Activated naive CD4-positive, alpha-beta T cell treated with anti-CD3 and anti-CD28 coated beads for 36 hours (primary cell): ENCODE measurements at regions of chr3 and their contacts with region 1.

Region 1: DNA sequence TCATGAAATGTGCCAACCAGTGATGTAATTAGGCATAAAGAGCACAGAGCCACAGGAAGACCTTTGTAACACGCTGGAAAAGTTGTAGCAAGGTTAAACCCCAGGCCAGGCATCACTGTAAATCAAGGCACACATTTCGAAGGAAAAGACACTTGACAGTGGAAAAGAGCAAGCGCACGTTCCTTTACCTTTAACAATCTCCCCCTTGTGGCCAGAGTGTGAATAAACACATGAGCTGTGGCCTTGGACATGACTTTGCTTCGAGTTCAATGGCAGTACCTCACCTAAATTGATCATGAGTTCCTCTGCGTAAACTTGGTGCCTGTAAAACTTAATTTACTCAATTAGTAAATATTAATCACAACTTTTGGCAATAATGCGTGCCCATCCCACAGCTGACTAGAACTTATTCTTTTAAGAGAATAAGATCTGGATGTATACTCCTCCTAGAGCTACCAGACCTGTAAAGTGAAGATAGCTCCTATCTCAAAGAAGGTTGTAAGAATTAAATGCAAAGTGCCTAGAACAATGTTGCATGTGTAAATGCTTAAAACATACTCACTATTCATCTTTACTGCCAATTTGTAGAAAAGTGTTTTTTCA is 757.0 kb upstream of the NECTIN3 start:
- DNase-seq: peak; percentile 66
- H3K4me3 Mint-ChIP-seq: no peak overlapping the region
- H3K27ac Mint-ChIP-seq: no peak overlapping the region
- H3K4me1 Mint-ChIP-seq: peaks cover 2% of the 10 kb centered on the region
- H3K27me3 Mint-ChIP-seq: no peaks in the 10 kb centered on the region

Region 2: GRCh38 chr3:109275702-109276293 is 1038.8 kb before region 1 on chr3:
- CTCF ChIA-PET with region 1: no interaction called
- intact Hi-C with region 1: loop called (anchors 10 kb)
- DNase-seq: peak; percentile 34
- H3K4me3 Mint-ChIP-seq: no peak overlapping the region
- H3K27ac Mint-ChIP-seq: no peak overlapping the region
- H3K4me1 Mint-ChIP-seq: no peaks in the 10 kb centered on the region
- H3K27me3 Mint-ChIP-seq: peaks cover 4% of the 10 kb centered on the region

Region 3: DNA sequence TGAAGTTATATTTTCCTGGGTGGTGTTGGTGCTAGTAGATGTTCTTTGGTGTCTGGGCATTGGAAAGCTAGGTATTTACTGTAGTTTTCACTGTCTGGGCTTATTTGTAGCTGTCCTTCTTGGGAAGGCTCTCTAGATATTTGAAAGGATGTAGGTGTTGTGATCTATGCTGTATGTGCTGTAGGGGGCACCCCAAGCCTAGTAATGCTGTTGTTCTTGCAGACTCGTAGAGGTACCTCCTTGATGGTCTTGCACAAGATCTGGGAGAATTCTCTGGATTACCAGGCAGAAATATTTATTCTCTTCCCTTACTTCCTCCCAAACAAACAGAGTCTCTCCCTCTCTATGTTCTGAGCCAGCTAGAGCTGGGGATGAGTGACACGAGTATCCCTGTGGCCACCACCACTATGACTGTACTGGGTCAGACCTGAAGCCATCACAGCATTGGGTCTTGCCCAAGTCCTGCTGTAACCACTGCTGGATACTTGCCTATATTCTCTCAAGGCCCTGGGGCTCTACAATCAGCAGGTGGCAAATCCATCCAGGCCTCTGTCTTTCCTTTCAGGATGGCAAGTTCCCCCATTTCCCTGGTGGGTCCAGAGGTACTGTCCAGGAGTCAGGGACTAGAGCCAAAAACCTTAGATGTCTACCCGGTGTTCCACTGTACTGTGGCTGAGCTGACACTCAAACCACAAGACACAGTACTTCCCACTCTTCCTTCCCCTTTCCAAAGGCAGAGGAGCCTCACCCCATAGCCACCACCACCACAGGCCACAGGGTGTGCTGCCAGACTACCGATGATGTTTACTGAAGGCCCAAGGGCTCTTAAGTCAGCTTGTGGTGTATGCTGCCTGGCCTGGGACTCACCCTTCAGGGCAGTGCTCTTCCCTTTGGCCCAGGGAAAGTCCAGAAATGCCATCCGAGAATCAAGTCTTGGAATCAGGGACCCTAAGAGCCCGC is 782.1 kb before region 1 on chr3:
- CTCF ChIA-PET with region 1: interaction called, 14 read pairs
- intact Hi-C with region 1: loop called (anchors 1 kb)
- DNase-seq: peak; percentile 67
- H3K4me3 Mint-ChIP-seq: no peak overlapping the region
- H3K27ac Mint-ChIP-seq: no peak overlapping the region
- H3K4me1 Mint-ChIP-seq: no peaks in the 10 kb centered on the region
- H3K27me3 Mint-ChIP-seq: peaks cover 5% of the 10 kb centered on the region

Region 4: DNA sequence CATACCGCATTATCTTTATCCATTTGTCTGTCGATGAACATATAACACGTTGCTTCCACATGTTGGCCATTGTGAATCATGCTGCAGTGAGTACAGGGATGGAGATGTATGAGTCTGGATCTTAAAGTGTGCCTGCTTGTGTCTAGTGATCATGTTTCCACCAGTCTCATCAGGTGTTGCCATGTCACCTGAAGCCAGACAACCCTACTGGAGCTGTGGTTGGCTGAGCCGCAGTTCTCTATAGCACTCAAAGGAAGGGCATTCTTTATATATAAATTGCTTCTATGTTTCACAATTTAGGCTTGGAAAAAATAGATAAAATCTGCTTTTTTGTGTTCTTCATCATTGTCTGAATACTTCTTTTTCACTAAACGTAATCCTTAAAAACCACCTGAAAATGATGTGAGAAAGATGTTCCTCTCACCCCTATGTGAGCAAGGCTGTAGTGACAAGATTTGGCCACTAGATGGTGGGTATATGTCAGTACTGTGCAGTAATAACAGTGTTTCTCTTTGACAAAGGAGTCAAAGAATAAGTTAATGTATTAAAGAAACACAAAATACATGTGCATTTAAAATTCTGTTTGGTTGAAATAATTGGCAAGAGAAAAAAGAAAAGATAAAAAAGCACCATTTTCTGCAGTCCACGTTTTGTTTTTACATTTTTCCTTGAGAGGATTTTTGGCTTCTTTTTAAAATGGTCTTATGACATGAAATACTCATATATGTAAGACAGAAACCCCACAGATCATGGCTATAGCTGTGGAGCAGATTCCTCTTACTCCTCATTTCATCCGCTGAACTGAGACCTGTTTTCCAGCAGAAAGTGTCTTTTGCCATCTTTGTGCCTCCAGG is 582.8 kb before region 1 on chr3:
- CTCF ChIA-PET with region 1: no interaction called
- intact Hi-C with region 1: loop called (anchors 1 kb)
- DNase-seq: peak; percentile 77
- H3K4me3 Mint-ChIP-seq: no peak overlapping the region
- H3K27ac Mint-ChIP-seq: no peak overlapping the region
- H3K4me1 Mint-ChIP-seq: peaks cover 3% of the 10 kb centered on the region
- H3K27me3 Mint-ChIP-seq: no peaks in the 10 kb centered on the region

Region 5: DNA sequence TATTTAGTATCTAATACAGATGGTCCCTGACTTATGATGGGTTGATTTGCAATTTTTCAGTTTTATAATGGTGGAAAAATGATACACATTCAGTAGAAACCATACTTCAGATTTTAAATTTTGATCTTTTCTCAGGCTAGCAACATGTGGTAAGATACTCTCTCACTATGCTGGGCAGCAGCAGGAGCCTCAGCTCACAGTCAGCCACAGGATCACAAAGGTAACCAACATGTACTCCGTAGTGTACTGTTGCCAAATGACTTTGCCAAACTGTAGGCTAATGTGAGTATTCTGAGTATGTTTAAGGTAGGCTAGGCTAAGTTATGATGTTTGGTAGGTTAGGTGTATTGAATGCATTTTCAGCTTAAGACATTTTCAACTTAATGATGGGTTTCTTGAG is 478.7 kb before region 1 on chr3:
- CTCF ChIA-PET with region 1: no interaction called
- intact Hi-C with region 1: no loop called
- DNase-seq: no peak
- H3K4me3 Mint-ChIP-seq: no peak overlapping the region
- H3K27ac Mint-ChIP-seq: no peak overlapping the region
- H3K4me1 Mint-ChIP-seq: peaks cover 1% of the 10 kb centered on the region
- H3K27me3 Mint-ChIP-seq: no peaks in the 10 kb centered on the region

Region 6: DNA sequence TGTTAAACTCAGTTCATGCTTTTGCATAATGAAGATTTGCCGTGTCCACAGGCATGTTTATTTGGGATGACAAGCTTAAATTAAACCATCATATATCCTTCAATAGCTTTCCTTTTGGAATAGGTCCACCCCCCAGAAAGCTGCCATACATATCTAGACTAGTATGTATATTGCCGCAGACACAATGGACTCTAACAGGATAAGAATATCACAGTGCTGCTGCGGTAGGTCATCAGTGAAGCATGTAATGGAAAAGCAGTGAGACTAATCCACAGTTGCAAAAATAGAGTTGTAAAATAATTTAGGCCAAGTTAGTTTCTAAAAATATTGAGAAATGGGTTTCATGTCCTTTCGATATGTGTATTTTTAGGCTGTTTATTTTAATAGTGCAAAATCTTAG is 157.4 kb before region 1 on chr3:
- CTCF ChIA-PET with region 1: no interaction called
- intact Hi-C with region 1: no loop called
- DNase-seq: no peak
- H3K4me3 Mint-ChIP-seq: no peak overlapping the region
- H3K27ac Mint-ChIP-seq: no peak overlapping the region
- H3K4me1 Mint-ChIP-seq: no peaks in the 10 kb centered on the region
- H3K27me3 Mint-ChIP-seq: no peaks in the 10 kb centered on the region

Region 7: DNA sequence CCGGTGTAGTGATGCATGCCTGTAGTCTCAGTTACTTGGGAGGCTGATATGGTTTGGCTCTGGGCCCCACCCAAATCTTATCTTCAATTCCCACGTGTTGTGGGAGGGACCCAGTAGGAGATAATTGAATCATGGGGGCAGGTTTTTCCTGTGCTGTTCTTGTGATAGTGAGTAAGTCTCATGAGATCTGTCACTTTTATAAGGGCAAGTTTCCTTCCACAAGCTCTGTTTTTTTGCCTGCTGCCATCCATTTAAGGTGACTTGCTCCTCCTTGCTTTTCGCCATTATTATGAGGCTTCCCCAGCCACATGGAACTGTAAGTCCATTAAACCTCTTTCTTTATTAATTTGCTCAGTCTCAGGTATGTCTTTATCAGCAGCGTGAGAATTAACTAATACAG is 190.3 kb after region 1 on chr3:
- CTCF ChIA-PET with region 1: no interaction called
- intact Hi-C with region 1: no loop called
- DNase-seq: no peak
- H3K4me3 Mint-ChIP-seq: no peak overlapping the region
- H3K27ac Mint-ChIP-seq: no peak overlapping the region
- H3K4me1 Mint-ChIP-seq: no peaks in the 10 kb centered on the region
- H3K27me3 Mint-ChIP-seq: peaks cover 6% of the 10 kb centered on the region

Region 8: DNA sequence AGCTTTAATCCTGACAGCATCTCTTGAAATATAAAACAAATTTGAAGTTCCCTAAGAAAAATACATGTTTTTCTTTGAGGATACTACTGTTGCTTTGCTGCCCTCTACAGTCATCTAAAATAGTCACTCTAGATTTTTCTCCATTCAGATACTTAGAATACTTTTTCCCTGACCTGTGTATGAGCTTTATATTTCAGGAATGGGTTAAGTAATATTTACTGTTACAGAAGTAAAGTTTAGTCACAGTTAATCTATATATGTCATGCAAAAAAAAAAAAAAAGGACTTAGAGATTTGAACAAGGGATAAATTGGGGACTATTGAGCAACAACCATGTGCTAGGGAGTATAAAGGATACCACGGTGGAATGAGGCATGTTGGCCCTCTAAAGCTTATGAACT is 765.8 kb after region 1 on chr3:
- CTCF ChIA-PET with region 1: no interaction called
- intact Hi-C with region 1: loop called (anchors 5 kb)
- DNase-seq: no peak
- H3K4me3 Mint-ChIP-seq: no peak overlapping the region
- H3K27ac Mint-ChIP-seq: no peak overlapping the region
- H3K4me1 Mint-ChIP-seq: no peaks in the 10 kb centered on the region
- H3K27me3 Mint-ChIP-seq: peaks cover 2% of the 10 kb centered on the region